ENCODE measurements at regions of chr15 and their contacts with region 1.

Region 1: GRCh38 chr15:88454867-88455810 is 12.0 kb downstream of the MRPL46 start:
- DNase-seq: peak; percentile 79
- H3K4me3 ChIP-seq: no peak overlapping the region
- H3K27ac ChIP-seq: no peak overlapping the region; a peak in 1 of 4 replicates
- H3K4me1 ChIP-seq: peaks cover 0 to 12% of the 10 kb centered on the region in 2 experiments; a peak in 1 of 4 replicates
- H3K27me3 ChIP-seq: no peaks in the 10 kb centered on the region
- CTCF ChIP-seq: peak; percentile 70
- EP300 ChIP-seq: peak in 1 of 2 experiments; percentile 39; a peak in 1 of 4 replicates
- RAD21 ChIP-seq: peak; percentile 82

Region 2: DNA sequence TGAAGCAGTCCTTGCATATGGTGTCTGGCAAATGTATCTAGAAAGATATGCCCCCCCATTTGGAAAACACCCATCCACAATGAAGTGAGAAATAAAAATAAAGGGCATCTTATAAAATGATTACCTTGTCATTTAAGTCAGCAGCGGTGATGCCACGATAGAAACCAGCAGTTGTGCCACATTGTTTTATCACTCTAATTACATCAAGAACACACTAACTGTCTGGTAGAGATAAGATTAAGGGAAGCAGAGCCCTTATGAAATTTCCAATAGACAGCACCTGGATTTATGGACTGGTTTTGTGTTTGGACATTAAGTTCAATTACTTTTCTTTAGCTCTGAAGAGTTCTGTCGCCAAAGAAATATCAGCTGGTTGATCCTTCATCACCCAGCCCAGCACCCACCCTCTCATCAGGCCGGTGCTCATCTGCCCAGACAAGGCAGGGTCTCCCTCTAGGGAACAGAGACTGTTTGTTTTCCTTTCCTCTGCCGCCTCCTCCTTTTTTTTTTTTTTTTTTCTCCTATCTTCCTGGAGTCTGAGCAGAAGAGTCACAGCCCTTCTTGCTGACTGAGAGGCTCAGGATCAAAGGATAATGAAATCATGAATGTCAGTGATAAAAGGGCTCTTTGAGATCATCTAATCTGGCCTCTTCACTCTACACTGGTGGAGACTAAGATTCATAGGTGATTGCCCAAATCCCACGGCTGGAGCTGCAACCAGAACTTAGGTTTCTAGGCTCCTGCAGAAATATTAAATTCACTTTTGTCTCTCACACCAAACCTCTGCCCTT is 662.7 kb before region 1 on chr15:
- CTCF ChIA-PET with region 1: no interaction called
- POLR2A ChIA-PET with region 1: no interaction called
- DNase-seq: peak; percentile 50
- H3K4me3 ChIP-seq: no peak overlapping the region
- H3K27ac ChIP-seq: peak overlapping the region in 1 of 2 experiments; percentile 96; a peak in 2 of 4 replicates
- H3K4me1 ChIP-seq: peaks cover 0 to 19% of the 10 kb centered on the region in 2 experiments; a peak in 2 of 4 replicates
- H3K27me3 ChIP-seq: no peaks in the 10 kb centered on the region
- CTCF ChIP-seq: no peak
- EP300 ChIP-seq: peak in 1 of 2 experiments; percentile 98; a peak in 2 of 4 replicates
- RAD21 ChIP-seq: peak; percentile 39

Region 3: GRCh38 chr15:88246666-88247446 is 208.3 kb before region 1 on chr15:
- CTCF ChIA-PET with region 1: interaction called, 195 read pairs
- POLR2A ChIA-PET with region 1: no interaction called
- DNase-seq: peak; percentile 89
- H3K4me3 ChIP-seq: peak overlapping the region in 1 of 2 experiments; percentile 61; a peak in 2 of 4 replicates
- H3K27ac ChIP-seq: no peak overlapping the region
- H3K4me1 ChIP-seq: peaks cover 0 to 8% of the 10 kb centered on the region in 2 experiments; a peak in 1 of 4 replicates
- H3K27me3 ChIP-seq: no peaks in the 10 kb centered on the region
- CTCF ChIP-seq: peak; percentile 93
- EP300 ChIP-seq: no peak
- RAD21 ChIP-seq: peak; percentile 87

Region 4: GRCh38 chr15:88274553-88275460 is 180.3 kb before region 1 on chr15:
- CTCF ChIA-PET with region 1: interaction called, 76 read pairs
- POLR2A ChIA-PET with region 1: no interaction called
- DNase-seq: peak; percentile 87
- H3K4me3 ChIP-seq: peak overlapping the region in 1 of 2 experiments; percentile 55; a peak in 1 of 4 replicates
- H3K27ac ChIP-seq: no peak overlapping the region
- H3K4me1 ChIP-seq: no peaks in the 10 kb centered on the region; a peak in 1 of 4 replicates
- H3K27me3 ChIP-seq: no peaks in the 10 kb centered on the region
- CTCF ChIP-seq: peak; percentile 81
- EP300 ChIP-seq: no peak
- RAD21 ChIP-seq: peak; percentile 90

Region 5: DNA sequence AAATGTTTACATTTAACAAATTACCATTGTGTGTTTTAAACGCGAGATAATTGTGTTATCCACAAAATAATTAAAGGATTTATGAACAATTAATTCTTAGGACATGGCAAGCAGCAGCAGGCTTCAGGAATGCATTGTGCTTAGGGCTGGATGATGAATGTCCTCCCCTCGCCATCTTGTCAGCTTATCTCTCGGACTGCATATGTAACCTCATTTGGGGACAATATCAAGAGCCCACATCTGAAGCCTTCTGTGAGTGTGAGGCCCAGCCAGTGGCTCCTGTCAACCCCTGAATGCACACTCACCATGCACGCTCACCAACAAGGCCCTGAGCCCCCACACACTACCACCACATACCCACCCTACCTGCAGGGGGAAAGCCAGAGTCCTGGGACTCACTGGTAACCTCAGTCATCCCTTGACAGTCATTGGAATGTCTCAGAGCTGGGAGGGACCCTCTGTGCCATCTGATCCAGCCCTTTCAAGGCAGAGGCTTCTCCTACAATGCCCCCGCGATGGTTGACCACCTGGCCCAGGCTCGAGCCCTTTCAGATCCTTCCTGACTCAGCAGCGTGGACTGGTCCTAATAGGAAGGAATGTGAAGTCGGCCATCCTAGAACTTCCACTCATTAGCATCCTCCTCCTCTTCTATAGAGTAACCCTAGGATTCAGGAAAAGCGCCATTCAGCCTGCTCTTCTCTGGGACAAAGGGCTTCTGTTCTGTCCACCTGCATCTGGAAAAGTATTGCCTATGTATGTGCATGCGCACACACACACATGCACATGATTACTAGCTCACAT is 26.1 kb before region 1 on chr15:
- CTCF ChIA-PET with region 1: interaction called, 25 read pairs
- POLR2A ChIA-PET with region 1: no interaction called
- DNase-seq: peak; percentile 69
- H3K4me3 ChIP-seq: no peak overlapping the region
- H3K27ac ChIP-seq: no peak overlapping the region
- H3K4me1 ChIP-seq: peaks cover 0 to 22% of the 10 kb centered on the region in 2 experiments; a peak in 2 of 4 replicates
- H3K27me3 ChIP-seq: no peaks in the 10 kb centered on the region
- CTCF ChIP-seq: no peak
- EP300 ChIP-seq: peak in 1 of 2 experiments; percentile 87; a peak in 2 of 4 replicates
- RAD21 ChIP-seq: 0 out of 2 replicates have a peak, but pooled peaks have one; percentile 8

Region 6: DNA sequence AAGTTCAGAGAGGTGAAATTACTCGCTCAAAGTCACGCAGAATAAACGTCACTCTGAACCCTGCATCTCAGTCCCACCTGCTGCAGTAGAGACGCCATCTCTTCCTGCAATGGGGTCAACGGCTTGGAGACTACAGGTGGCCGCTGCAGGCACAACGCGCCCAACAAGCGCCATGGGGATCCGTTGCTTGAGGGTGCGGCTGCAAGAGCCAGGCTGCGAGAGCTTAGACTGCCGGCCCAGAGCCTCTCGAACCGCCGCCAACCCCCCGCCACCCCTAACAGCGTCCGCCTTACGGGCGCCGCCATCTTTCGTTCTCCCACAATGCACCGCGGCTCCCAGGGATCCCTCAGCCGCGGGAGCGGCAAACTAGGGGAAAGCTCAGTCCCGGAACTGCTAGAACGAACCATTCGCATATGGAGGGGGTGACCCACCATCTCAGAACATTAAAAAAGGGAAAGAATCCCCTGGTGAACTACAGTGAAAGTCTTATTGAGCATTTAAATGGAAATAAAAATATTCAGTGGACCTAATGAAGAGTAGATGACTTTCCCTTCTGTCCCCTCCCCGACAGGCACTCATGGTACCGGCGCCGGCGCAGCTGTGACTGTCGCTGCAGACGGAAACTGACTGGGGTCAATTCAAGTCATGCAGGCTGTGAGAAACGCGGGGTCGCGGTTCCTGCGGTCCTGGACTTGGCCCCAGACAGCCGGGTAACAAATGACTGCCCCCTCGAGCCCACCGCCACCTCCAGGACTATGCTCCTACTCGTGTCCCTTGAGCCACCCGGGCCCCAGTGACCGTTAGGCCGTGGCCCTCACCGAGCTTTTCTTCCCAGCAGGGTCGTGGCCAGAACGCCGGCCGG is 12.2 kb after region 1 on chr15 and contains the starts of genes MRPL46 and MRPS11:
- CTCF ChIA-PET with region 1: interaction called, 31 read pairs
- POLR2A ChIA-PET with region 1: interaction called, 4 read pairs
- DNase-seq: peak; percentile 92
- H3K4me3 ChIP-seq: peak within 1 kb of the TSS; percentile 94 to 97
- H3K27ac ChIP-seq: peak within 1 kb of the TSS; percentile 77 to 95
- H3K4me1 ChIP-seq: peaks cover 8 to 17% of the 10 kb centered on the region in 2 experiments; a peak in 3 of 4 replicates
- H3K27me3 ChIP-seq: no peaks in the 10 kb centered on the region
- CTCF ChIP-seq: no peak
- EP300 ChIP-seq: peak in 1 of 2 experiments; percentile 58; a peak in 1 of 4 replicates
- RAD21 ChIP-seq: no peak
- polyA plus RNA-seq, gene MRPL46: 33.8 and 36.6 TPM in 2 replicates
- polyA plus RNA-seq, gene MRPS11: 70.0 and 101 TPM in 2 replicates

Region 7: GRCh38 chr15:88512601-88513000 is 57.5 kb after region 1 on chr15:
- CTCF ChIA-PET with region 1: no interaction called
- POLR2A ChIA-PET with region 1: no interaction called
- DNase-seq: no peak
- H3K4me3 ChIP-seq: no peak overlapping the region
- H3K27ac ChIP-seq: no peak overlapping the region
- H3K4me1 ChIP-seq: no peaks in the 10 kb centered on the region
- H3K27me3 ChIP-seq: no peaks in the 10 kb centered on the region
- CTCF ChIP-seq: no peak
- EP300 ChIP-seq: no peak
- RAD21 ChIP-seq: no peak

Region 8: DNA sequence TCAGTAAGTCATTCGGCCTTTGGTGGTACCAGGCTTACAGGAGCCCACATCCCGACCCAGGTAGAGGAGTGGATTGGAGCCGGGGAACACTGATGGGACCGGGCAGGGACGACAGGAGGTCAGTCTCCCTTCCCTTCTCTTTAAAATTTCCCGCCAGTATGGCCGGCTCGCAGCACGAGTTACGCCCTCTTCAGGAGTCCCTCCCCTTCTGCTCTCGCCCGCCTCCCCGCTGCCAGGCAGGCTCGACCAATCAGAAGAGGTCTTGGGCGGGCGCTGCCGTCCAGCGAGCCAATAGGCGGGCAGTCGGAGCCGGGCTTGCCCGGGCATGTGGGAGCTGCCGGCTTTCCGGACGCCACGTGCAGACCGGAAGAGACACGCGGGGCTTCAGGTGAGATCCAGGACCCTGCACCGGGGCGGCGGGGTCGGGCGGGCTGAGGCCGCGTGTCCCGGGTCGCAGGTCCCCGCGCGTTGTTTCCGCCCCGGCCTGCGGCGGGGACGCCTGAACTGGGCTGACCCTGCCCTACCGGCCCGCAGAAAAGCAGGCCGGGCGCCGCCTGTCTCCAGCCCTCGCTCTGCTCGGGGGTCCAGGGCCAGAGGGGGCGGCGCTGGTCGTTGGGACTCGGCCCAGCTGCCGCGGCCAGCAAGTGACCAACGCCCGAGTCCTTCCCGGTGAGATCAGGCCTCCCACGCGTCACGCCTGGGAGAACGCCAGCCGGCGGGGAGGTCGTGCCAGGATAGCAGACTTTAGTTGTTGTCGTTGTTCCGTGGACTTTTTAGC is 166.0 kb after region 1 on chr15 and contains the start of gene AEN:
- CTCF ChIA-PET with region 1: no interaction called
- POLR2A ChIA-PET with region 1: no interaction called
- DNase-seq: peak; percentile 99
- H3K4me3 ChIP-seq: peak within 1 kb of the TSS; percentile 87 to 93
- H3K27ac ChIP-seq: peak within 1 kb of the TSS; percentile 84 to 89
- H3K4me1 ChIP-seq: peaks cover 17 to 18% of the 10 kb centered on the region in 2 experiments
- H3K27me3 ChIP-seq: no peaks in the 10 kb centered on the region
- CTCF ChIP-seq: no peak; the same call in 1 of the 2 replicates
- EP300 ChIP-seq: no peak
- RAD21 ChIP-seq: no peak
- polyA plus RNA-seq, gene AEN: 46.4 and 65.2 TPM in 2 replicates